Endothelial cell of umbilical vein (primary cell): ENCODE measurements at regions of chr6 and their contacts with region 1.

Region 1: GRCh38 chr6:170554013-170554795 is at the start of gene TBP:
- DNase-seq: peak; percentile 97
- H3K4me3 ChIP-seq: peak within 1 kb of the TSS; percentile 76 to 89 (median 81)
- H3K27ac ChIP-seq: peak within 1 kb of the TSS; percentile 84
- H3K4me1 ChIP-seq: peaks cover 22% of the 10 kb centered on the region
- H3K27me3 ChIP-seq: no peaks in the 10 kb centered on the region
- CTCF ChIP-seq: no peak
- POLR2A ChIP-seq: peak; percentile 86
- total RNA-seq, gene TBP: 15.3 and 17.7 TPM in 2 replicates

Region 2: DNA sequence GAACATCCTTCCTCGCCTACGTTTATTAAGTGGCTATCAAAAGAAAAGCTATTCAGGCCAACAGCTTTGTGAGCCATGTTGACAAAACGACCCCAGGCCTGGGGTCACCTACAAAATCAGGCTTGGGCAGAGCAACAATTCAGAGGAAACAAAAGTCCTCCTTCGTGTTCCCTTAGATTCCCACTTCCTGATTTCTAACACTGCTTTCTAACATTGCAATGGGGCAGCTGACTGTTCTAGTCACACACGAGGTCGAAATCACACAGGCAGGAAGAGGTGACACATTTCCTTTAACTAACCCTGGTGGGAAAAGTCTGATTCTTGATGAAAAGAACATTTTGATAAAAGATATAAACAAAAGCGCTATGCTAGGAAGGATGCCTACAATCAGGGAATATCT is 884.3 kb before region 1 on chr6:
- CTCF ChIA-PET with region 1: no interaction called
- POLR2A ChIA-PET with region 1: no interaction called
- dilution Hi-C with region 1: no loop called
- intact Hi-C with region 1: loop called (anchors 1 kb)
- DNase-seq: peak; percentile 98
- H3K4me3 ChIP-seq: no peak overlapping the region
- H3K27ac ChIP-seq: peak overlapping the region; percentile 98
- H3K4me1 ChIP-seq: peaks cover 26% of the 10 kb centered on the region
- H3K27me3 ChIP-seq: no peaks in the 10 kb centered on the region
- CTCF ChIP-seq: no peak
- POLR2A ChIP-seq: no peak

Region 3: DNA sequence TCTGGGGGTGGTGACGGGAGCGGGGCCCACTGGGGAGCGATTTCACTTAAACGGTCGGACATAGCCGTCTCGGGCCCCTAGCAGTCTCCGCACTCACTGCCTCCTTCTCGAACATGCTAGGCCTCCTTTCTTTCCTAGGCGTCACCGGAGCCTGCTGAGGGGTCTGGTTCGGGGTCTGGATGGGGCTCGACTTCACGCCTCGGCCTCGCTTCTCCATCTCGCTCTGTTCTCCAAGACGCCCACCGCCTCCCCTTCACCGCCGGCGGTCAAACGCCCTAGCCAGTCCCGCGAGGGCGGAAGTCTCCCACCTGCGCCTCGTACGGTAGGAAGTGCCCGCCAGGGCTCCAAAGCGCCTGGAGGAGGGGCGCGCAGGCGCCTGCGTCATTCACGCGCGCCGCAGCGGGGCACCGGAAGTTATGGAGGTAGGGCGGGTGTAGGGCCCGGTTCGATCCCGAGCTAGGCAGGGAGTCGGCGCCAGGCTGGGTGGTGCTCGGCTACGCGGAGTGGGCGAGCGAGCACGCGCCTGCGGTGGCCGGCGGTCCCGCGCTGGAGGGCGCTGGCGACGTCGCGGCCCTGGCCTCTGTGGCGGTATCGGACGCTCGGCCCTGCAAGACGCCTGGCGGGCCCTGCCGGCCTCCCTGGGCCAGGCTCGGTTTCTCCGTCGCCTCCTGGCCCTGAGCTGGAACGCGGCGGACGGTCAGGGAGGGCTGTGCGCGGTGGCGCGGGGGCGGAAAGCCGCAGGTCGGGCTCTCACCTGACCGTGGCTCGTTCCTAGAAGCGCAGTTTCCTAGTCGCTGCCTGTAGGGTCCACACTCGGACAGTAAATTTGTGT is 802.7 kb before region 1 on chr6 and contains the starts of genes DYNLT2 and ERMARD:
- CTCF ChIA-PET with region 1: no interaction called
- POLR2A ChIA-PET with region 1: no interaction called
- dilution Hi-C with region 1: no loop called
- intact Hi-C with region 1: loop called (anchors 1 kb)
- DNase-seq: peak; percentile 96
- H3K4me3 ChIP-seq: peak within 1 kb of the TSS; percentile 62 to 95 (median 92)
- H3K27ac ChIP-seq: peak within 1 kb of the TSS; percentile 83
- H3K4me1 ChIP-seq: peaks cover 14% of the 10 kb centered on the region
- H3K27me3 ChIP-seq: no peaks in the 10 kb centered on the region
- CTCF ChIP-seq: peak in 1 of 2 donors; percentile 23
- POLR2A ChIP-seq: peak; percentile 87
- total RNA-seq, gene DYNLT2: 0.88 and 1.5 TPM in 2 replicates
- total RNA-seq, gene ERMARD: 18.8 and 23.8 TPM in 2 replicates

Region 4: GRCh38 chr6:170584181-170584953 is 30.2 kb after region 1 on chr6 and contains the start of gene PDCD2:
- CTCF ChIA-PET with region 1: interaction called, 6 read pairs
- POLR2A ChIA-PET with region 1: interaction called, 4 read pairs
- dilution Hi-C with region 1: no loop called
- intact Hi-C with region 1: loop called (anchors 1 kb)
- DNase-seq: peak; percentile 83
- H3K4me3 ChIP-seq: peak within 1 kb of the TSS; percentile 87 to 100 (median 98)
- H3K27ac ChIP-seq: peak within 1 kb of the TSS; percentile 98
- H3K4me1 ChIP-seq: peaks cover 13% of the 10 kb centered on the region
- H3K27me3 ChIP-seq: peaks cover 0 to 1% of the 10 kb centered on the region in 2 experiments
- CTCF ChIP-seq: no peak
- POLR2A ChIP-seq: peak; percentile 98
- total RNA-seq, gene PDCD2: 60.0 and 67.8 TPM in 2 replicates